ENCODE measurements at regions of chr6 and their contacts with region 1.

Region 1: DNA sequence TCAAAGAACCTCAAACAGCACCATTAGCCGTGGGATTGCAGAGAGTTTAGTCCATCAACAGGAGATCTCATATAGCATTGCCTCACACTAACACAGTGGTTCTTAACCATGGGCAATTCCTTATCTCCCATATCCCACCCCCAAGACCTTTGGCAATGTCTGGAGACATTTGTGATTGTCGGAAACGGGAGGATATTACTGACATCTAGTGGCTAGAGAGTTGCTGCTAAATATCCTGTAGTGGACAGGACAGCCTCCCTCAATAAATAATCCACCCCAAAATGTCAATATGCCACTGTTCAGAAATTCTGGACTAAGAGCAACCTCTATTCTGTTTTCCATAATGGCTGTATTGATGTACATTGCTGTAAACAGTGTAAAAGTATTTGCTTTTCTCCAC is 210.1 kb upstream of the CCN2 start:
- DNase-seq: no peak
- ATAC-seq: peak; percentile 47 to 72
- H3K4me3 ChIP-seq: no peak overlapping the region
- H3K27ac ChIP-seq: no peak overlapping the region
- H3K4me1 ChIP-seq: no peaks in the 10 kb centered on the region
- H3K27me3 ChIP-seq: no peaks in the 10 kb centered on the region
- CTCF ChIP-seq: peak; percentile 55

Region 2: DNA sequence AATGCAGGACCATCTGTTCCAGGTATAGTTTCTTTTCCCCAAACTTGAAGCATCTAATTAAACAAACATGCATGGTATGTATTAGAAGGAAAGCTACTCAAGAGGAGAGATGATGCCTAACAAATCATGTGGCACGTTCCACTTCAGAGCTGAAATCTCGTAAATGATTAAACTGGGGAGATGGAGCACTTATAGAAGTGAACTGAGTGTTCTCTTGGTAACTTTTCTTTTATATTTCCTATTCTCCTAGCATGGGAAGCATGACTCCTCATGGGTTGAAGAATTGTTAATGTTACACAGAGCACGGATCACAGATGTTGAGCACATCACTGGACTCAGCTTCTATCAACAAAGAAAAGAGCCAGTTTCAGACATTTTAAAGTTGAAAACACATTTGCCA is 271.2 kb before region 1 on chr6:
- intact Hi-C with region 1: no loop called
- DNase-seq: no peak
- ATAC-seq: no peak
- H3K4me3 ChIP-seq: no peak overlapping the region
- H3K27ac ChIP-seq: no peak overlapping the region
- H3K4me1 ChIP-seq: no peaks in the 10 kb centered on the region
- H3K27me3 ChIP-seq: no peaks in the 10 kb centered on the region
- CTCF ChIP-seq: no peak

Region 3: GRCh38 chr6:131923356-131923755 is 237.9 kb before region 1 on chr6:
- intact Hi-C with region 1: loop called (anchors 10 kb)
- DNase-seq: no peak
- ATAC-seq: peak; percentile 74 to 85
- H3K4me3 ChIP-seq: no peak overlapping the region
- H3K27ac ChIP-seq: no peak overlapping the region
- H3K4me1 ChIP-seq: no peaks in the 10 kb centered on the region
- H3K27me3 ChIP-seq: peaks cover 5% of the 10 kb centered on the region
- CTCF ChIP-seq: peak; percentile 73

Region 4: GRCh38 chr6:132122871-132123270 is 38.4 kb before region 1 on chr6:
- intact Hi-C with region 1: no loop called
- DNase-seq: no peak
- ATAC-seq: no peak
- H3K4me3 ChIP-seq: no peak overlapping the region
- H3K27ac ChIP-seq: no peak overlapping the region
- H3K4me1 ChIP-seq: no peaks in the 10 kb centered on the region
- H3K27me3 ChIP-seq: no peaks in the 10 kb centered on the region
- CTCF ChIP-seq: no peak

Measured in lower lobe of right lung (tissue), 2 donors.